ENCODE measurements at regions of chr17 and their contacts with region 1.

Region 1: GRCh38 chr17:14926526-14927122 is 338.5 kb downstream of the PMP22 start:
- DNase-seq: peak; percentile 44 to 58 (median 56)
- H3K4me3 ChIP-seq: no peak overlapping the region
- H3K4me3 Mint-ChIP-seq: no peak overlapping the region
- H3K27ac ChIP-seq: no peak overlapping the region
- H3K27ac Mint-ChIP-seq: no peak overlapping the region
- H3K4me1 ChIP-seq: no peaks in the 10 kb centered on the region
- H3K4me1 Mint-ChIP-seq: no peaks in the 10 kb centered on the region
- H3K27me3 ChIP-seq: no peaks in the 10 kb centered on the region
- H3K27me3 Mint-ChIP-seq: peaks cover 3 to 9% (median 5%) of the 10 kb centered on the region in 3 donors
- CTCF ChIP-seq: peak; percentile 89

Region 2: GRCh38 chr17:13594762-13595598 is 1331.6 kb before region 1 on chr17:
- intact Hi-C with region 1: loop called (anchors 2 to 5 kb)
- DNase-seq: peak; percentile 53 to 66 (median 57)
- H3K4me3 ChIP-seq: no peak overlapping the region
- H3K4me3 Mint-ChIP-seq: peak overlapping the region in 1 of 2 donors; percentile 66
- H3K27ac ChIP-seq: no peak overlapping the region
- H3K27ac Mint-ChIP-seq: no peak overlapping the region
- H3K4me1 ChIP-seq: no peaks in the 10 kb centered on the region
- H3K4me1 Mint-ChIP-seq: peaks cover 17% of the 10 kb centered on the region
- H3K27me3 ChIP-seq: peaks cover 21 to 24% of the 10 kb centered on the region in 2 donors
- H3K27me3 Mint-ChIP-seq: peaks cover 24 to 29% (median 25%) of the 10 kb centered on the region in 3 donors
- CTCF ChIP-seq: peak; percentile 86

Region 3: GRCh38 chr17:14211801-14212200 is 714.8 kb before region 1 on chr17:
- intact Hi-C with region 1: loop called (anchors 5 to 10 kb)
- DNase-seq: peak; percentile 18 to 46 (median 20)
- H3K4me3 ChIP-seq: no peak overlapping the region
- H3K4me3 Mint-ChIP-seq: no peak overlapping the region
- H3K27ac ChIP-seq: no peak overlapping the region
- H3K27ac Mint-ChIP-seq: peak overlapping the region in 1 of 7 donors; percentile 22
- H3K4me1 ChIP-seq: no peaks in the 10 kb centered on the region
- H3K4me1 Mint-ChIP-seq: peaks cover 4% of the 10 kb centered on the region
- H3K27me3 ChIP-seq: no peaks in the 10 kb centered on the region
- H3K27me3 Mint-ChIP-seq: peaks cover 2% of the 10 kb centered on the region in 3 donors
- CTCF ChIP-seq: peak; percentile 61

Region 4: GRCh38 chr17:14840616-14841231 is 85.9 kb before region 1 on chr17:
- intact Hi-C with region 1: no loop called
- DNase-seq: no peak
- H3K4me3 ChIP-seq: no peak overlapping the region
- H3K4me3 Mint-ChIP-seq: no peak overlapping the region
- H3K27ac ChIP-seq: no peak overlapping the region
- H3K27ac Mint-ChIP-seq: no peak overlapping the region
- H3K4me1 ChIP-seq: no peaks in the 10 kb centered on the region
- H3K4me1 Mint-ChIP-seq: no peaks in the 10 kb centered on the region
- H3K27me3 ChIP-seq: no peaks in the 10 kb centered on the region
- H3K27me3 Mint-ChIP-seq: peaks cover 0 to 4% (median 2%) of the 10 kb centered on the region in 3 donors
- CTCF ChIP-seq: no peak

Measured in CD14-positive monocyte (primary cell).